Posterior vena cava (tissue), 2 donors: ENCODE measurements at regions of chr17 and their contacts with region 1.

Region 1: DNA sequence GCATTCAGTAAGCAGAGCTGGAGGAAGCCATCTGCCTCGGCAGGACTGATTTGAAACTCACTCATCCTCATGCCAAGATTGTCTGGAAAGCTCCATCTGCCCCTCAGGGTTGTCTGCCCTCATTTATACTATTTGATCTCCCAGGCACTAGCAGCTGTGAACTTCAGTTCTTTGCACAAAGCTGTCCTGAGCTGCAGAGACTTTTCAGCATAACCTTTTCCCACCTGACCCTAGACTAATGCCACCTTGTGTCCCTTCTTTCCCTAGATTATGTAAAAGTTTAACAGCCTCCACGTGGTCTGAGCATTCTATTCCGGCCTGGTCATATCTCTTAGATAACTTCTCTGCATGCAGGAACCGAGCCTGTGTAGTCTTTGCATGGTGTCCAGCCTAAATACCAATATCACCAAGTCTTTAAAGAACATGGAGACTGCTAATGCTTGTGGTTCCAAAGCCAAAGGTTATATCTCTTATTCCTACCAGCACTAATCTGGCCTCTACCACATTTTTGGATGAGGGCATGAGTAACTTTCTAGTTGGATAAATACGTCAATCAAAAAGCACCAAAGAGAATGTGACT is 29.1 kb downstream of the STAT5A start:
- DNase-seq: no peak

Region 2: DNA sequence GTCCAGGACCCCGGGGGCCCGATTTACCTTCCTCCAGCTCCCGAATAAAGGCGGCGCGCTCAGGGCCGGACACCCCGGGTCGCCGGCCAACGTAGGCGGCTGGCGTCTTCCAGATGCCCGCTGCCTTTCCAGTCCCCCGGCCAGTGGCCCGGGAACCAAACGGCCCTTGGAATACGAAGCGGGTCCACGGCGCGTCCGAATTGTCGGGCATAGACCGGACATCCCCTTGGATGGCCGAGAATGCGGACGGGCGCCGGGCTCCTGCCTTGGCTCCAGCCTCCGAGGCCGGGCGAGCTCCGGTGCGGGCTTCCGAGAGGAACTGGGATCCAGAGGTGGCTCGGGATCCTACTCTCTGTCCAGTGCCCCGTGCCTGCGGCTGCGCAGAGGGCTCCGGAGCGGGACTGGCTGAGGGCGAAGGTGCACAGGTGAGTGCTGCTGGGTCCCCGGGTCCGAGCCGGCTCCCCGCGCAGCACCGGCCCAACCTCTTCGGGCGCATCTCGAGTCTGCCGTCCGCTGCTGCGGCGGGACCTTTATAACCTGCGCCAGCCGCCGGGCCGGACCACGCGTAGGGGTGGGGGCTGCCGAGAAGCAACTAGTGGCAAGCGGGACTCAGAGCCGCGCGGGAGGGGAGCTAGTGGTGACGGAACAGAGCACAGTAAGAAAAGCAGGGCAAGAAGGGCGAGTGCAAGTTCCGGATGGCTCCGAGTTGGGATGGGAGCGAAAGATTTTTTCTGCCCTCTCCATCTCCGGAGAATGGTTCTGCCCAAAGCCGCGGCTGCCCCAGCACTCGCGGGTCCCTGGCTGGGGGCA is 583.0 kb before region 1 on chr17 and contains the start of gene HAP1:
- intact Hi-C with region 1: no loop called
- DNase-seq: peak; percentile 82
- total RNA-seq, gene HAP1: 0.19 TPM in 1 of 2 donors, not detected in the other

Region 3: GRCh38 chr17:42305543-42306384 is 11.6 kb before region 1 on chr17:
- intact Hi-C with region 1: loop called in 1 of 2 experiments (anchors 1 kb)
- DNase-seq: no peak

Region 4: DNA sequence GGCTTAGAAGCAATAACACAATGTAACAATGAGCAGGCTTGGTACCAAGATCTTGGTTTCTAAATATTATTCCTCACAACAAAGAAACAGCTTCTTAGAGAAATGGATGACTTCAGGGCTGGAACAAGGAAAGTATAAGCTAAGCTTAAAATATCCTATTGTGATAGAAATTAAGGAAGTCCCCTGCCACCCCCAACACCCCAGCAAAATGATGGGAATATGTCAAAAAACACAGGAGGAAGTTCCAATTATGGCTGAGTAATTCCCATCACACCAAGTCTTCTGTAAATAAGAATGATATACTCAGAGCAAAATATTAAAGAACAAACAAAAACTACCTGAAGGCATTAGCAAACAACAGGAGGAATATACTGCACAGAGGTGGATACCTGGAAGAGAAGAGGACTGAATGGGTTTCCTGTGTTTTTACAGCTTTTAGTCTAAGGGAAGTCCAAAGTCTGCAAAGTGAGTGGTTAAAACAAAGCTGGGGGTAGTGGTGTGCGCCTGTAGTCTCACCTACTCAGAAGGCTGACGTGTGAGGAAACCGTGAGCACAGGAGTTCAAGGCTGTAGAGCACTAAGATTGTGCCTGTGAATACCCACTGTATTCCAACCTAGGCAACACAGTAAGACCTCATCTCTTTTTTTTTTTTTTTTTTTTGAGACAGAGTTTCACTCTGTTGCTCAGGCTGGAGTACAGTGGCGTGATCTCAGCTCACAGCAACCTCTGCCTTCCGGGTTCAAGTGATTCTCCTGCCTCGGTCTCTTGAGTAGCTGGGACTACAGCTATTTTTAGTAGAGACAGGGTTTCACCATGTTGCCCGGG is 124.2 kb after region 1 on chr17:
- intact Hi-C with region 1: no loop called
- DNase-seq: no peak

Region 5: GRCh38 chr17:42566883-42567573 is 249.7 kb after region 1 on chr17 and contains the start of gene MLX:
- intact Hi-C with region 1: no loop called
- DNase-seq: peak; percentile 98
- total RNA-seq, gene MLX: 27.5 to 28.5 TPM